ENCODE measurements at regions of chr11 and their contacts with region 1.

Region 1: GRCh38 chr11:44095506-44096394 is at the start of gene EXT2:
- DNase-seq: peak; percentile 19
- H3K4me3 ChIP-seq: peak within 1 kb of the TSS; percentile 82
- CTCF ChIP-seq: peak; percentile 97

Region 2: DNA sequence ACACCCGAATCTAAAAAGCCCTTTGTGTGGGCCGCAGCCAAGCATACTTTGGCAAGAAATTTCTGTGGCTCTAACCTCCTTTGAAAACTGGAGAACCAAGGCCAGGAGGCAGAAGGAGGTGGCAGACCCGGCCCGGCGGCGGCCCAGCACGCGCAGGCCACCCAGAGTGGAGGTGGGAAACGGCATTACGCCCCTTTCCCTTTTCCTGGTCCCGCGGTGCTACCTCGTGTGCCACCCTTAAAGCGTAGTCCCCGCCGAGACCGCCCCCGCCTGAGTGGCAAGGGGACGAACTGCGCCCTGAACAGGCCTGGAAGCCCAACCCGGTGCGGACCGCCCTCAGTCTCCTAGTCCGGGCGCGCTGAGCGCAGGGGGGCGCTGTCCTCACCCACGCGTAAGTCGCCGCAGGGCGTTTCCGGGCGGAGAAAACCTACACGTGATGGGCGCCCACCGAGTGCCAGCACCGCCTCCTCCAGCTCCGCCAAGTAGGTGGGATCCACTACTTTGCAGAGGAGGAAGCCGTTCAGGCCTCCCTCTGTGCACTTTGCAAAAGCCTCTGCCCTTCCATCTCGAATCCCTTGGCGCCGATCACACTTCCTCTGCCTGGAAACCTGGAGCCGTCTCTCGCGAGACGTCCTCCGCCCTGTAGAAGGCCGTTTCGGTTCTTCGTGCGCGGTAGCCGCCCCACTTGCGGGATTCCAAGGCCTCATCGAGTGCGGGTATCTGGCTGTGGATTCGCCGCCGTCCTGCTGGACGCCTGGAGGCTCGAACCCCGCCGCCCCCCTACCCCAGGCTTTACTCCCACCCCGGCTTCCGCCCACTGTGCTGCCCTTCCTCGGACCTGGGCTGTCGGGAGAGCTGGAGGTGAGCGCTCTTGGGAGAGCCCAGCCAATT is 29.7 kb before region 1 on chr11 and contains the start of gene ACCS:
- CTCF ChIA-PET with region 1: interaction called, 217 read pairs
- POLR2A ChIA-PET with region 1: no interaction called
- DNase-seq: peak; percentile 50
- H3K4me3 ChIP-seq: peak within 1 kb of the TSS; percentile 64
- CTCF ChIP-seq: peak; percentile 91

Region 3: GRCh38 chr11:44110231-44110679 is 14.5 kb after region 1 on chr11:
- CTCF ChIA-PET with region 1: interaction called, 111 read pairs
- POLR2A ChIA-PET with region 1: no interaction called
- DNase-seq: no peak
- H3K4me3 ChIP-seq: no peak overlapping the region
- CTCF ChIP-seq: peak; percentile 80

Region 4: GRCh38 chr11:44133335-44133946 is 37.7 kb after region 1 on chr11:
- CTCF ChIA-PET with region 1: interaction called, 34 read pairs
- POLR2A ChIA-PET with region 1: no interaction called
- DNase-seq: no peak
- H3K4me3 ChIP-seq: no peak overlapping the region
- CTCF ChIP-seq: peak; percentile 54

Region 5: GRCh38 chr11:44149651-44150050 is 53.9 kb after region 1 on chr11:
- CTCF ChIA-PET with region 1: interaction called, 10 read pairs
- POLR2A ChIA-PET with region 1: no interaction called
- DNase-seq: no peak
- H3K4me3 ChIP-seq: no peak overlapping the region
- CTCF ChIP-seq: no peak

Region 6: GRCh38 chr11:44531116-44531504 is 435.4 kb after region 1 on chr11:
- CTCF ChIA-PET with region 1: interaction called, 166 read pairs
- POLR2A ChIA-PET with region 1: no interaction called
- DNase-seq: no peak
- H3K4me3 ChIP-seq: no peak overlapping the region
- CTCF ChIP-seq: no peak

Measured in AG04449 (cell line).